ENCODE measurements at regions of chr9 and their contacts with region 1.

Region 1: DNA sequence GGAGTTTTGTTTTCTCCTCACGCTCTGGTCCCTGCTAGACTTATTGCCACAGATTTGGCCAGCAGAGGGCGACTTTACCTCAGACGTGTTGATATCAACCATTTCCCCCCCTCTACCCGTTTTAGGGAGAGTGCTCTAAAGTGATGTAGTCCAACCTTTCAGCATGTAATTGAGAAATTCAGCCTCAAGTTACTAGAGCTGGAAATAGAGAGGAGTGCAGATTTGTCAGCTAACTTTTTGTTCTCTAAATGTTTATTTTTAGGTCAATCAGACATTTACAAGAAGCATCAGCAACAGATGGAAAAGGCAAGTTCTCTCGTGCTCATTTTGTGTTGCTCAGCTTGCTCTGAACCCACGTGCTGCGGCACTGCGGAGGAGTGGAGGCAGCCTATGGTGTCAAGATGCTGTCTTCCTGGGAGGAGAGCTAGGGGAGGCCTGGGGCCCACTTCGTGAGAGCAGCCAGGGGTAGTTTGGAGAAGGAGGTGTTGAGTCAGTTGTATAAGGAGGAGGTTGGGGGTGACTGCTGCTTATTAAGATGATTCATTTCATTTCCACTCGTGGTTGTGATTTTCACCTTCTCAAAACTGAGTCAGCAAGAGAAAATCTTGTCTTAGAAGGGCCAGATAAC is 53.6 kb downstream of the GPR107 start:
- DNase-seq: peak; percentile 89
- H3K4me3 Mint-ChIP-seq: no peak overlapping the region
- H3K27ac Mint-ChIP-seq: no peak overlapping the region
- H3K4me1 Mint-ChIP-seq: peaks cover 13% of the 10 kb centered on the region
- H3K27me3 Mint-ChIP-seq: no peaks in the 10 kb centered on the region

Region 2: DNA sequence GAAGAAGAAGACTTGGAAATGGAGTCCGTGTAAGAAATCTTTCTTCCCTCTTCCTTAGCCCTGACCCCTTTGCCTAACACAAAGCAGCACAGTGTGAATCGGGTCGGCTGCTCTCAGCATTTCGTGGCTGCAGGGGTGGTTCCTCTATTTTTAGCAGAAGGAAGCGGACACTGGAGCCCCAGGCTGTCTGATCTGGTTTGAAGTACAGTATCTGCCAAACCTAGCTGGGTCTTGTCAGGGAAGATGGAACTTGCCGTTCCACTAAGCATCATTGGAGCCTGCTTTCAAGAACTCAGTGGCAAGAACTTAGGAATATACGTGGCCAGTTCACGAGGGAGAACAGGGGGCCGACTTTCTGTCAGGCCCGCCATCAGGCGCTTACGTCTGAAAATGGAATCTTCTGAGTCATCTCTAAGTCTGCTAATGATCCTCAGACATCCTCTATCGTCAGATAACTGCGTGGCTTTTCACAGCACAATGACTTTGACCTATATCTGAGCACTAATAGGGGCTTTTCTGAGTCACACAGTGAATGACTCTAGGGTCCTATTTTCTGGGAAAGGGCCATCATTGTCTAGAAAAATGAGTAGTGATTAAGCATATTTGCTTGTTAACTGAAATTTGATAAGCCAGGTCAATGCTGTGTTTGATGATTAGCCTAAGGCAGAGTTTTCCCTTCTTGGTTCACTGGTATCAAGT is 21.5 kb after region 1 on chr9:
- CTCF ChIA-PET with region 1: interaction called, 21 read pairs
- DNase-seq: peak; percentile 47
- H3K4me3 Mint-ChIP-seq: peak overlapping the region; percentile 62
- H3K27ac Mint-ChIP-seq: peak overlapping the region; percentile 97
- H3K4me1 Mint-ChIP-seq: peaks cover 58% of the 10 kb centered on the region
- H3K27me3 Mint-ChIP-seq: no peaks in the 10 kb centered on the region

Region 3: DNA sequence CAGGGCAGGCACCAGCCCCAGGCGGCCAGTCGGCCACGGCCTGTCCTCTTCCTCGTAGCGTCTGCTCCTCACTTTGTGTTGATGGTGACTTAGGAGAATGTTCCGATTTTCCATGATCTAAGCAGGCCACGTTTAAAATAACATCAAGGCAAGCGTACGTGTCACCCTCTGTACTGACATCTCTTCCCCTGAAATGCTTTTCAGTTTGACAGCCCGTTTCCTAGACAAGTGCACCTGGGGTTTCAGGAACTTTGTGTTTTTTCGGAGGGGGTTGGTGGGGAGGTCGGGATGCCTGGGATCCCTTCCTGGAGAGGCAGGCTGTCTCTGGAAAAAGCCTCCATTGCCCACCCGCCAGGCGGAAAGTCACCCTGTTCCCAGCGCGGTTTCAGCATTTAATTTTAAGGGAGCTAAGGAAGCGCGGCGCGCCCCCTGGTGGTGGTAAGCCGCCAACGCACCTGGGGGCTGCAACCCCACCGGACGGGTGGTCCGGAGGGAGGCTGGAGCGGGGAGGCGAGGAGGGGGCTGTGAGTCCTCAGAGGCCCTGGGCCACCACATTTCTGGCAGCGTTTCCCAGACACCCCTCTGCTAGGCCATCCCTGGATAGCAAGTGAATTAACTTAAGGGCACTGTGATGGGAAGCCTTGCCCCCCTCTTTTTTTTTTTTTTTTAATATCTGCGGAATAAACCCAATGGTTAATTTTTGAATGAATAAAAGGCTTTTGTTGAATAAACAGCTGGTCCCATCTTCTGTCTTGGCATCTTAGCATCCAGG is 128.7 kb after region 1 on chr9:
- CTCF ChIA-PET with region 1: interaction called, 52 read pairs
- DNase-seq: peak; percentile 76
- H3K4me3 Mint-ChIP-seq: no peak overlapping the region
- H3K27ac Mint-ChIP-seq: no peak overlapping the region
- H3K4me1 Mint-ChIP-seq: peaks cover 19% of the 10 kb centered on the region
- H3K27me3 Mint-ChIP-seq: peaks cover 7% of the 10 kb centered on the region

Region 4: GRCh38 chr9:130243015-130243734 is 135.8 kb after region 1 on chr9:
- CTCF ChIA-PET with region 1: interaction called, 52 read pairs
- DNase-seq: peak; percentile 82
- H3K4me3 Mint-ChIP-seq: no peak overlapping the region
- H3K27ac Mint-ChIP-seq: peak overlapping the region; percentile 14
- H3K4me1 Mint-ChIP-seq: peaks cover 27% of the 10 kb centered on the region
- H3K27me3 Mint-ChIP-seq: peaks cover 35% of the 10 kb centered on the region